Uterus (tissue), 4 donors: ENCODE measurements at regions of chr16 and their contacts with region 1.

Region 1: GRCh38 chr16:57648590-57649442 is 19.3 kb upstream of the ADGRG3 start:
- DNase-seq: peak; percentile 63 to 69
- H3K4me3 ChIP-seq: no peak overlapping the region
- H3K27ac ChIP-seq: peak overlapping the region; percentile 63 to 75
- H3K4me1 ChIP-seq: no peaks in the 10 kb centered on the region
- H3K27me3 ChIP-seq: no peaks in the 10 kb centered on the region
- CTCF ChIP-seq: peak; percentile 95 to 99 (median 97)
- POLR2A ChIP-seq: no peak

Region 2: DNA sequence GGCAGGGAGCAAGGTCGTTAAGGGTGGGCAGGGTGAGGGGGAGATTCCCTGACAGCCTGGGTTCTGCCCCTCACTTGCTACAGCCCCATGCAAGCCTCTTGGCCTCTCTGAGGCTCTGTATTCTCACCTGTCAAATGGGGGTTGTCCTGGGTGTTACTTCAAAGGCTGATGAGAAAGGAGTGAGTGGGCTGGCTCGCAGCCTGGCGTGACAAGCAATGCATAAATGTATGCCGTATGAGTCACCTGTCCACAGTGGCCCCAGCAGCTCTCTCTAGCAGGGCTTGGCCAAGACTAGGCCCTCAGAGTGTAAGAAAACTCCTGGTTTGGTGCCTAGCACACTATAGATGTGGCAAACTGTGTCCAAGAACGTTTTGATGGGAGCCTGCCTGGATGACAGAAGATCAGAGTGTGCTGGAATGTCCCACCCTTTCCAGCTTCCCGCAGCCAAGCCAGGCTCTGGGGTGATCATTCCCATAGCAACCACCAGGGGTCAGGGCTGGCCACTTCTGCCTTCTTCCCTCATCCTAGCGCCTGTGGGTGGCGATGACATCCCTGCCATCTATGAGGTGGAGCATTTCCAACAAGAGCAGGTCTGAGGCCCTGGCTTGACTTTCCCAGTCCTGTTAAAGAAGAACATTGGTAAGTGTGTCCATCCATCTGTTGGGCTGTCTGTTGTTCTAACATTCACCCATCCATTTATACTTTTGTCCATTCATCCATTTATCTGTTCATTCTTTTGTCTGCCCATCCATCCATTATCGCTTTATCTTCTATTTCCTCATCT is 57.5 kb before region 1 on chr16:
- intact Hi-C with region 1: loop called (anchors 10 kb)
- DNase-seq: peak; percentile 52 to 64
- H3K4me3 ChIP-seq: no peak overlapping the region
- H3K27ac ChIP-seq: peak overlapping the region; percentile 42 to 78
- H3K4me1 ChIP-seq: no peaks in the 10 kb centered on the region
- H3K27me3 ChIP-seq: no peaks in the 10 kb centered on the region
- CTCF ChIP-seq: peak; percentile 70 to 89 (median 78)
- POLR2A ChIP-seq: no peak

Region 3: DNA sequence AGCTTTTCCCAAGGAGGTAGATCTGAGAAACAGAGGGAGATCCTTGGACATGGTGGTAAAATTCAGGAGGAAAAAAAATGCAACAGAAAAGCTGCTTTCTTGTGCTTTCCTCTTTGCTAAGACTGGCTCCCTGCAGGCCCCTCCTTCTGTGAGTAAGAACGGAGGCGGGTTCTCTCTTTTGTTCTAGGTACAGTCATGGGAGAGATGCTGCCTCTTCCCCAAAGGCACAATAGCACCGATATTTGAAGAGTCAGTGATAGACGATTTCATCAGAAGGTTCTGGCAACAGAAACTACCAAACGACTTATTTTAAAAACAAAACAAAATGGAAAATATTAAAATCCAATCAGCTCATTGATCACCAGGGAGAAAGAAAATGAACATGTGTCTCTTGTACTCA is 186.1 kb after region 1 on chr16:
- intact Hi-C with region 1: no loop called
- DNase-seq: no peak
- H3K4me3 ChIP-seq: no peak overlapping the region
- H3K27ac ChIP-seq: no peak overlapping the region
- H3K4me1 ChIP-seq: no peaks in the 10 kb centered on the region
- H3K27me3 ChIP-seq: no peaks in the 10 kb centered on the region
- CTCF ChIP-seq: no peak
- POLR2A ChIP-seq: no peak